Upper lobe of right lung (tissue), 1 donor: ENCODE measurements at regions of chr3 and their contacts with region 1.

Region 1: DNA sequence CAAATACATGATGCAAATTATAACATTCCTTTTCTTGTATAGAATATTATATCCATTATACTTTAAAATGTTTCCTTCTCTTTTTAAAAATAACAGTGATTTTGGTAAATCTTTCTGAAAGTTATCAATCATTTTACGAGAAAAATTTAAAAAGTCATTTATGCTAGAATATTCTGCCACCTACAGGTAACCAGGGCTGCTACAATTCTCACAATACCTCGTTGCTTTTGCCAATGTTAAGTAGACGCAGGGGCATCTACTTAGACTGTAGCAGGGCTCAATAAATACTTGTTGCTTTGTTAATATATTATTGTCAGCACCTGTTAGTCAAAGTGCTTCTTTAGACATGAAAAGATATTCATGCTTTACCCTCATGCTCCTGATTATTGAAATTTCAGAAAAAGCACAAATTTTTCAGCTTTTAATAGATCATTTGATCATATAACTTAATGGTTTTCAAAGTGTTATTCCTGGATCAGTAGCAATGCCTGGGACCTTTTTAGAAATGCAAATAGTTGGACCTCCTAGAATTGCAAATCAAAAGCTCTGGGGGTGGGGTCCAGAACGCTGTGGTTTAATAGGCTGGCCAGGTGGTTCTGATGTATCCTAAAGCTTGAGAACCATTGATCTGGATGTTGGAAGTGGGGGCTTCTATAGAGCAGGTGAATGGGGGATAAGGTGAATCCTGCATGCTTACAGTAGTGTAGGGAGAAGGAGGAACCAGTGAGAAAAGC is 223.6 kb upstream of the PDZRN3 start:
- DNase-seq: no peak
- ATAC-seq: no peak
- H3K4me3 ChIP-seq: no peak overlapping the region
- H3K27ac ChIP-seq: no peak overlapping the region
- H3K4me1 ChIP-seq: no peaks in the 10 kb centered on the region
- H3K27me3 ChIP-seq: no peaks in the 10 kb centered on the region
- CTCF ChIP-seq: peak; percentile 57

Region 2: GRCh38 chr3:73511571-73512525 is 336.5 kb before region 1 on chr3:
- intact Hi-C with region 1: loop called (anchors 10 kb)
- DNase-seq: no peak
- ATAC-seq: no peak
- H3K4me3 ChIP-seq: no peak overlapping the region
- H3K27ac ChIP-seq: peak overlapping the region; percentile 33
- H3K4me1 ChIP-seq: peaks cover 9% of the 10 kb centered on the region
- H3K27me3 ChIP-seq: no peaks in the 10 kb centered on the region
- CTCF ChIP-seq: no peak